Activated naive CD4-positive, alpha-beta T cell treated with anti-CD3 and anti-CD28 coated beads for 36 hours (primary cell): ENCODE measurements at regions of chr15 and their contacts with region 1.

Region 1: GRCh38 chr15:72199711-72200212 is 2.2 kb upstream of the GRAMD2A start:
- DNase-seq: peak; percentile 84
- H3K4me3 Mint-ChIP-seq: no peak overlapping the region
- H3K27ac Mint-ChIP-seq: no peak overlapping the region
- H3K4me1 Mint-ChIP-seq: peaks cover 29% of the 10 kb centered on the region
- H3K27me3 Mint-ChIP-seq: peaks cover 4% of the 10 kb centered on the region

Region 2: GRCh38 chr15:71784719-71785118 is 415.0 kb before region 1 on chr15:
- CTCF ChIA-PET with region 1: no interaction called
- intact Hi-C with region 1: no loop called
- DNase-seq: peak; percentile 10
- H3K4me3 Mint-ChIP-seq: no peak overlapping the region
- H3K27ac Mint-ChIP-seq: no peak overlapping the region
- H3K4me1 Mint-ChIP-seq: no peaks in the 10 kb centered on the region
- H3K27me3 Mint-ChIP-seq: peaks cover 14% of the 10 kb centered on the region

Region 3: DNA sequence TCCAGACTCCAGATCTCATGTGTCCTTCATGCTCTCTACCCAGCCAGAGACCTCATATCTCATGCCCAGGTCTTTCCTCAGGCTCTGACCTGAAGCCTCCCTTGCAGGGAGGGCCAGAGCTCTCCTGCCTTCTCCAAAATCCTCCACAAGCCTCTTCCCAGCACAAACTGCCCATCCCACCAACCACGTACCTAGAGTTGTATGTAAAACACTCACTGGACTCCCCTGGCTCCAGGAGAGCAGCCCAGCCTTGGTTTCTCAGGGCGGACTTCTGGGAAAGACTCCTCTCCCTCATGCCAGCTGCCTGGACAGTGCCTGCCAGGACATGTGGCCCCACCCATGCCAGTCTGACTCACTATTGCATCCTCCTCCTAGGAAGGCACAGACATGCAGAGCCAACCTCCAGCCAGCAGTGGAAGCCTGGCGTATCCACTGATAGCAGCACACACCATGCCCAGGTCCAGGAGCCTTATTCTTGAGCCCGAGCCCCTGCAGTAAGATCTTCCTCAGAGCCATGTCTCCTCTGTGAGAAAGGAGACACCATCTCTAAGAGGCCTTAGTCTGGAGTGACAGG is 22.6 kb after region 1 on chr15:
- CTCF ChIA-PET with region 1: interaction called, 18 read pairs
- intact Hi-C with region 1: no loop called
- DNase-seq: no peak
- H3K4me3 Mint-ChIP-seq: no peak overlapping the region
- H3K27ac Mint-ChIP-seq: peak overlapping the region; percentile 25
- H3K4me1 Mint-ChIP-seq: peaks cover 70% of the 10 kb centered on the region
- H3K27me3 Mint-ChIP-seq: no peaks in the 10 kb centered on the region

Region 4: GRCh38 chr15:72272213-72273002 is 72.6 kb after region 1 on chr15 and contains the start of gene PARP6:
- CTCF ChIA-PET with region 1: interaction called, 4 read pairs
- intact Hi-C with region 1: loop called (anchors 5 kb)
- DNase-seq: peak; percentile 98
- H3K4me3 Mint-ChIP-seq: peak within 1 kb of the TSS; percentile 87
- H3K27ac Mint-ChIP-seq: peak within 1 kb of the TSS; percentile 91
- H3K4me1 Mint-ChIP-seq: peaks cover 36% of the 10 kb centered on the region
- H3K27me3 Mint-ChIP-seq: no peaks in the 10 kb centered on the region
- total RNA-seq, gene PARP6: 38.8 to 44.7 TPM

Region 5: GRCh38 chr15:72285927-72286516 is 86.3 kb after region 1 on chr15:
- CTCF ChIA-PET with region 1: interaction called, 3 read pairs
- intact Hi-C with region 1: loop called (anchors 1 kb)
- DNase-seq: peak; percentile 63
- H3K4me3 Mint-ChIP-seq: no peak overlapping the region
- H3K27ac Mint-ChIP-seq: no peak overlapping the region
- H3K4me1 Mint-ChIP-seq: no peaks in the 10 kb centered on the region
- H3K27me3 Mint-ChIP-seq: no peaks in the 10 kb centered on the region

Region 6: DNA sequence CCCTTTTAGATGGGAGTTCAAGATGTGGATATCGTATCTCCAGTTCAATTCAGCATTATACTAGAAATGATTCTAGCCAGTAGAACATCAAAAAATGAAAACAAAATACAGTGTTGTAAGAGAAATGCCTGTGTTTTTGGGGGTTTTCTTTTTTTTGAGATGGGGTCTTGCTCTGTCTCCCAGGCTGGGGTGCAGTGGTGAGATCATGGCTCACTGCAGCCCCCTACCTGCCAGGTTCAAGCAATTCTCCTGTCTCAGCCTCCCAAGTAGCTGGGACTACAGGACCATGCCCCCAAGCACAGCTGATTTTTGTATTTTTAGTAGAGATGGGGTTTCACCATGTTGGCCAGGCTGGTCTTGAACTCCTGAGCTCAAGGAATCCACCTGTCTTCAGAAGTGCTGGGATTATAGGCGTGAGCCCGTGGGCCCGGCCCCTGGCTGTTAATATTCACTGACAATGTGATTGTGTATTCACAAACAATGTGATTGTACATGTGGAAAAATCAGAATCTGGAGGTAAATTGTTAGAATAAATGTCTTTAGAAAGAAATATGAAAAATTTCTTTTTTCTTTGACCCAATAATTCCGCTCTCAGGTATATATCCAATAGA is 333.3 kb after region 1 on chr15:
- CTCF ChIA-PET with region 1: no interaction called
- intact Hi-C with region 1: loop called (anchors 10 kb)
- DNase-seq: peak; percentile 36
- H3K4me3 Mint-ChIP-seq: no peak overlapping the region
- H3K27ac Mint-ChIP-seq: no peak overlapping the region
- H3K4me1 Mint-ChIP-seq: peaks cover 47% of the 10 kb centered on the region
- H3K27me3 Mint-ChIP-seq: no peaks in the 10 kb centered on the region